Psoas muscle (tissue), 8 donors: ENCODE measurements at regions of chr7 and their contacts with region 1.

Region 1: GRCh38 chr7:51224811-51225612 is 91.6 kb downstream of the COBL start:
- DNase-seq: peak in 1 of 2 donors; percentile 69
- ATAC-seq: peak; percentile 69 to 82 (median 72)
- H3K4me3 ChIP-seq: no peak overlapping the region
- H3K27ac ChIP-seq: peak overlapping the region; percentile 47
- H3K4me1 ChIP-seq: peaks cover 36% of the 10 kb centered on the region
- H3K27me3 ChIP-seq: no peaks in the 10 kb centered on the region
- CTCF ChIP-seq: peak; percentile 51

Region 2: GRCh38 chr7:51187941-51188340 is 37.1 kb before region 1 on chr7:
- intact Hi-C with region 1: loop called (anchors 5 kb)
- DNase-seq: peak; percentile 41 to 75
- ATAC-seq: peak; percentile 74 to 88 (median 84)
- H3K4me3 ChIP-seq: no peak overlapping the region
- H3K27ac ChIP-seq: peak overlapping the region; percentile 50
- H3K4me1 ChIP-seq: peaks cover 15% of the 10 kb centered on the region
- H3K27me3 ChIP-seq: no peaks in the 10 kb centered on the region
- CTCF ChIP-seq: peak; percentile 52

Region 3: GRCh38 chr7:51350200-51350921 is 125.3 kb after region 1 on chr7:
- intact Hi-C with region 1: loop called (anchors 5 to 10 kb)
- DNase-seq: no peak
- ATAC-seq: peak; percentile 74 to 95 (median 86)
- H3K4me3 ChIP-seq: no peak overlapping the region
- H3K27ac ChIP-seq: no peak overlapping the region
- H3K4me1 ChIP-seq: peaks cover 9% of the 10 kb centered on the region
- H3K27me3 ChIP-seq: no peaks in the 10 kb centered on the region
- CTCF ChIP-seq: no peak

Region 4: DNA sequence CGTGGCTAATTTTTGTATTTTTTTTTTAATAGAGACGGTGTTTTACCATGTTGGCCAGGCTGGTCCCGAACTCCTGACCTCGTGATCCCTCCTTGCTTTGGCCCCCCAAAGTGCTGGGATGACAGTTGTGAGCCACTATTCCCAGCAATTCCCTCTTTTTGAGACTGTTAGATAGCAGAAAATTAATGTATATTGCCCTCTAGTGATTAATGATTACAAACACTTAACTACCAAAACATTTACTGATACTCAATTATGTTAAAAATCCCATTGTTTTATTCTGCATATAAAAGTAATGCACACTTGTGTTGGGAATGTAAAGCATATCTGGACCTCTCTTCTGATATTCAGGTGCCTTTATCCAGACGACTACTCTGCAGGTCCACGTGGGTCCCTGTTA is 132.8 kb after region 1 on chr7:
- intact Hi-C with region 1: loop called (anchors 5 to 10 kb)
- DNase-seq: no peak
- ATAC-seq: peak in 3 of 4 donors; percentile 35 to 58 (median 42)
- H3K4me3 ChIP-seq: no peak overlapping the region
- H3K27ac ChIP-seq: no peak overlapping the region
- H3K4me1 ChIP-seq: no peaks in the 10 kb centered on the region
- H3K27me3 ChIP-seq: no peaks in the 10 kb centered on the region
- CTCF ChIP-seq: peak; percentile 28